ENCODE measurements at regions of chr1 and their contacts with region 1.

Region 1: DNA sequence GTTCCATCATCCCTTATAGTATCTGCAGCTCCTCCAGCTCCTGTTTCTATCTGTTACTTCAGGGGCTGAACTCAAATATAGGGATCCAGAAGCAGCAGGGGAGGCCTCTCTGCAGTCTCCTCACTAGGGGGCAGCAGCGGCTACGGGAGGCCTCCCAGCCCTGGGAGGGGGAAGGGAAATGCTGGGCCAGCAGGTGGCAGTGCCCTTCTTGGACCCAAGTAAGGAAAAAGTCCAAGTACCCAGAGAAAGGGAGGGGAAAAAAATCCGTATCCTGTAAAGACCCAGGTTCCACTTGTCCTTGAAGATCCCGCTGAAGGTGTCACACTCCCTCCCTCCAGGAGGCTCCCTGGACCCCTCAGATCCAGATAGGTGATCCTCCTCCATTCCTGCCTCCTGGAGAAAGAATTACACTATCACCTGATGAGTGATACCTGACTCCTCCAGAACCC is 14.1 kb upstream of the NUAK2 start:
- DNase-seq: peak; percentile 90
- H3K4me3 ChIP-seq: peak overlapping the region in 1 of 2 experiments; percentile 42; a peak in 1 of 4 replicates
- H3K27ac ChIP-seq: no peak overlapping the region
- H3K4me1 ChIP-seq: no peaks in the 10 kb centered on the region
- H3K27me3 ChIP-seq: no peaks in the 10 kb centered on the region; the same call in 1 of the 2 replicates
- CTCF ChIP-seq: peak; percentile 98
- EP300 ChIP-seq: no peak
- RAD21 ChIP-seq: peak; percentile 79

Region 2: DNA sequence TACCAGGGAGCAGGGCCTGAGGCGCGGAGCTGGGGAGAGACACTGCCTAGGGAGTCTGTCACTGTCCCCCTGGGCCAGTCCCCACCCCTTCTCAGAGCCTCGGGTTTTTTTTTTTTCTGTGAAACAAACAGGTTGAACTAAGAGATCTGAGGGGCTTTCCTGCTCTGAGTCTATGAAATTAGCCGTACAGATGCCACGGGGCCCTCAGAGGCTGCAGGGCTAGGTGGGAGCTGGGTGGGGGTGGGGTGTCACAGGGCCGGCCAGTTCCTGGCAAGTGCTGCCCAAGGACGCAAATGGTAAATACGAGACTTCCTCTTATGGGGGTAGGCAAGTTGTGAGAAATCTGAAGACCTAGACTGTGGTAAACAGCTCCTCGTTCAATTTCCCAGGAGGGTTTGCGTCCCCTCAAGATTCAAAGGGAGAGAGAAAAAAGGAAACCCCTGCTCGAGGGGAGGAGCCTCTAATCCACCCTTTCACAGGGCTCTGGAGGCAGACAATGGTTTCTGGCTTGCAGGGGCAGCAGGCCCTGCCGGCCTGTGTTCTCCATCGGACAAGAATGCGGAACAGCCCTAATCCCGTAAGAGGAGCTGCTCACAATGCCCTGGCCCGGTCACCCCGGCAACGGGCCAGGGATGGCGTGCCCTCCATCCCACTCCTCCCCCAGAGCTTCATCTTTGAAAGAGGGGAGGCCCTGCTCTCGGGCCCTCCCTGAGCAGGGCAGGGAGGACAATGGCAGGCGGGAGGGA is 21.9 kb before region 1 on chr1:
- CTCF ChIA-PET with region 1: interaction called, 13 read pairs
- POLR2A ChIA-PET with region 1: no interaction called
- DNase-seq: no peak
- H3K4me3 ChIP-seq: no peak overlapping the region
- H3K27ac ChIP-seq: no peak overlapping the region
- H3K4me1 ChIP-seq: peaks cover 13 to 24% of the 10 kb centered on the region in 2 experiments
- H3K27me3 ChIP-seq: no peaks in the 10 kb centered on the region
- CTCF ChIP-seq: no peak
- EP300 ChIP-seq: no peak
- RAD21 ChIP-seq: no peak

Region 3: DNA sequence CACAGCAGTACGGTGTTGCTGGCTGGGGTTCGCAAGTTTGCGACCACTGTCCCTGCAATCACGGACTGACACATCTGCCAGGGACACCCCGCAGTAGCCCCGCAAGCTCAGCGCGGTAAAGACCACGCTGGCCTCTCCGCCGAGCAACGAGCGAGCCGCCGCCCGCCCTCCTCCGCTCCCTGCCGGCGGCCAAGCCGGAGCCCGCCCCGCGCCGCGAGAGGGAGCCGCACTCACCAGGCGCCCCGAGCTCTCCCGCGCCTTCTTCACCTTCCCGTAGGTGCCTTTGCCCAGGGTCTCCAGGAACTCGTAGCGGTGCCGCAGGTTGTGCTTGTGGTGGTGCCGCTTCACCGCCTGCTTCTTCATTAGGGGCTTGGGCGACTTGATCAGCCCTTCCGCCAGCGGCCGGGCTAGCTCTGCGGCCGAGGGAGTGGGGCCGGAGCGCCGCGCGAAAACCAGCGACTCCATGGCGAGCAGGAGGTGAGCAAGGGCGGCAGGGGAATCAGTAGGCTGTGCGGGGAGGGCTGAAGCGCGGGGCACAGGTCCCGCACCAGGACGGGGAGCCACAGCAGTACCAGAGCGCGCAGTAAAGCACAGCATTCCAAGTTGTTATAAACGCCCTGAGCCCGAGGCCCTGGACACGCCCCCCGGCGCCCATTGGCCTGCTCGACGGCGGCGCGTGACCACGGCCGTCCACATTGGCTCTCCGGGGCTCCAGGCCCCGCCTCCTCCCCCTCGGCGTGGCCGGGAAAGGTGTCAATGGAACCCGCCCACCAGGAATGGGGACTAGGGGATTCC is 14.3 kb before region 1 on chr1 and contains the start of gene NUAK2:
- CTCF ChIA-PET with region 1: interaction called, 70 read pairs
- POLR2A ChIA-PET with region 1: no interaction called
- DNase-seq: peak; percentile 94
- H3K4me3 ChIP-seq: peak within 1 kb of the TSS; percentile 78 to 95
- H3K27ac ChIP-seq: peak within 1 kb of the TSS in 1 of 2 experiments; percentile 75; a peak in 2 of 4 replicates
- H3K4me1 ChIP-seq: peaks cover 19 to 31% of the 10 kb centered on the region in 2 experiments
- H3K27me3 ChIP-seq: no peaks in the 10 kb centered on the region
- CTCF ChIP-seq: peak; percentile 45
- EP300 ChIP-seq: no peak
- RAD21 ChIP-seq: no peak
- polyA plus RNA-seq, gene NUAK2: 6.8 and 11.1 TPM in 2 replicates

Region 4: GRCh38 chr1:205365945-205366463 is 30.3 kb after region 1 on chr1:
- CTCF ChIA-PET with region 1: interaction called, 21 read pairs
- POLR2A ChIA-PET with region 1: no interaction called
- DNase-seq: no peak
- H3K4me3 ChIP-seq: no peak overlapping the region
- H3K27ac ChIP-seq: no peak overlapping the region
- H3K4me1 ChIP-seq: no peaks in the 10 kb centered on the region; a peak in 1 of 4 replicates
- H3K27me3 ChIP-seq: peaks cover 1% of the 10 kb centered on the region; the same call in 1 of the 2 replicates
- CTCF ChIP-seq: no peak
- EP300 ChIP-seq: no peak
- RAD21 ChIP-seq: no peak

Region 5: DNA sequence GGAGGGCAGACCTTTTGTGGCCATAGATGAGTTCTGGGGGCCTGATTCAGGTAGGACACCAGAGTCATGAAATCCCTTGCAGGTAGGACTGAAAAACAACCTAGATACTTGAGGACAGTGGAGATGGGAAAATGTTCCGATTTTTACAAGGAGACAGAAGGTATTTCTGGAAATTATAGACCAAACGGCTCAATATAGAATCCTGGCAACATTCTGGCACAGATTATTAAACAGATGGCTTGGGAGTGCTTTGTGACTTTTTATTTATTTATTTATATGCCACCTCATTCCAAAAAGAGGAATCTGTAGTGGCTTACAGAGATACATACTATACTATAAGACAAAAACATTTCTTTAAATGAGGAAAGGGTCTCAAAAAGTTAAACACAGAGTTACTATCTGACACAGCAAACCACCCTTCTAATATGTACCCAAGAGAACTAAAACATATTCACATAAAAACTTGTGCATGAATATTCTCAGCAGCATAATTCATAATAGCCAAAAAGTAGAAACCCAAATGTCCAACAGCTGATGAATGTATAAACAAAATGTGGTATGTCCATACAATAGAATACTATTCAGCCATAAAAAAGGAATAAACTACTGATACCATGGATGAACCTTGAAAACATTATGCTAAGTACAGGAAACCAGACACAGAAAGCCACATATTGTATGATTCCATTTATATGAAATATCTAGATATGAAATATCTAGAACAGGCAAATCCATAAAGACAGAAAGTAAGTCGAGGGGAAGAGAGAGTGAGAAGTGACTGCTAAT is 218.6 kb after region 1 on chr1:
- CTCF ChIA-PET with region 1: no interaction called
- POLR2A ChIA-PET with region 1: no interaction called
- DNase-seq: no peak
- H3K4me3 ChIP-seq: no peak overlapping the region
- H3K27ac ChIP-seq: no peak overlapping the region
- H3K4me1 ChIP-seq: no peaks in the 10 kb centered on the region
- H3K27me3 ChIP-seq: no peaks in the 10 kb centered on the region; the same call in 1 of the 2 replicates
- CTCF ChIP-seq: no peak
- EP300 ChIP-seq: no peak
- RAD21 ChIP-seq: no peak